Transverse colon (tissue), 4 donors: ENCODE measurements at regions of chr21 and their contacts with region 1.

Region 1: DNA sequence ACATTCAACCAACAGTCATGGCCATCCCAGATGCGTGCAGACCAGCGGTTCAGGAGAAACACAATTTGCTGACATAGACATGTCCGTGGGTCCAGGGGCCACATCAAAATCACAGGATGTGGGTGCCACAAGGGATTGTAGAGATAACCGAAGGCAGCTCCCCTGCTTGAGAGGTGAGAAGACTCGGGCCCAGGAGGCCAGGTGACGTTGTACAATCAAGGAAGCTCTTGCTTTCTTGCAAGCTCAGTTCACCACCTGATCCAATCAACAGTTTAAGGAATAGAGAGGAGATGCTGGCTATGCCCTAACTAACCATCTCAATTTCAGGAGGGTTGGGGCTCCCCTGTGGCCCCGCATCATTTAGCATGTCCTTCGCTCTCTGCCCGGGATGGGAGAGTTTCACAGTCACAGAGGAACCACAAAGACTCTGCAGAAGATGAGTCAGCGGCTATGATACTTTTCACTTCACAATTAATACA is 19.5 kb downstream of the UBASH3A start:
- DNase-seq: peak; percentile 30
- H3K4me3 ChIP-seq: no peak overlapping the region
- H3K27ac ChIP-seq: no peak overlapping the region
- H3K4me1 ChIP-seq: peaks cover 0 to 7% (median 0%) of the 10 kb centered on the region in 4 donors
- H3K27me3 ChIP-seq: peaks cover 9% of the 10 kb centered on the region
- CTCF ChIP-seq: no peak
- EP300 ChIP-seq: no peak
- POLR2A ChIP-seq: no peak

Region 2: DNA sequence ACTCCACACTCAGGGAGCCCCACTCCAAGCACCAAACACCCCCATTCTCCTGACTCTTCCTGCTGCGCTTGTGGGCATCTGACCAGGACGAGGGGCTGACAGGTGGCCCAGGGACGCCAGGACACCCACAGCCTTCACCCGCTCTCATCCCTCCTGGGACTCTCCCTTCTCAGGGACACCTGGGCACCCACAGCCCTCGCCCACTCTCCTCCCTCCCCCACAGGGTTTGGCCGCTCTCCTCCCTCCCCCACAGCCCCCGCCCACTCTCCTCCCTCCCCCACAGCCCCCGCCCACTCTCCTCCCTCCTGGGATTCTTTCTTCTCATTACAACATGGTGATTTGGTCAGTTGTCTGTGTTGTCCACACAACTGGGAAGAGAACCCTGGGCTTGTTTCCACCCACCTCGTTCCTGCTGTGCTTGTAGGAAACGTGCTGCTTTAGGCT is 587.5 kb before region 1 on chr21:
- in situ Hi-C with region 1: no loop called
- intact Hi-C with region 1: loop called (anchors 2 kb)
- DNase-seq: peak; percentile 26
- H3K4me3 ChIP-seq: no peak overlapping the region
- H3K27ac ChIP-seq: peak overlapping the region in 2 of 4 donors; percentile 17 to 19
- H3K4me1 ChIP-seq: no peaks in the 10 kb centered on the region
- H3K27me3 ChIP-seq: no peaks in the 10 kb centered on the region
- CTCF ChIP-seq: no peak
- EP300 ChIP-seq: no peak
- POLR2A ChIP-seq: no peak